Caco-2 (cell line): ENCODE measurements at regions of chr11 and their contacts with region 1.

Region 1: DNA sequence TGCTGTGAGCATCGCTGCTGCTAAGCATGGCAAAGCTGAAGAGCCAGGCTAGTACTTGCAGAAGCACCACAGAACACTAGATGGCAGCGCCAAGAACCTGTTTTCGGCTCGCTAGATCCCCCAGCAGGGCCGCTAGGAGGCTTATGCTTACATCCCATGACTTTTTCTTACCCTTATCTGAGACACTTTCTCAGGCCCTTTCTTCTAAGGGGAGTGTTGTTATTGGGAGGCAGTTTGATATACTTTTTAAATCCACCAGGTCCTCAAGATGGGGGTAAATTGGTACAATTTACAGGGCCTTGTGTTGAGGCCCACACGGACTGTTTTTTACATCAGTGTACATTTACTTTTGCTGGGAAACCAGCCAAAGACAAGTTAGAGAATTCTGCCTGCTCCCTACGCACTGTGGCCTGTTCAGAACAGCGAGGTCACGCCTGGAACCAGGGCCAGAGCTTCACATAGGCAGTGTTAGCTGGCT is 4.0 kb downstream of the TRIM6 start:
- DNase-seq: peak; percentile 74 to 77
- H3K4me3 ChIP-seq: no peak overlapping the region
- H3K4me3 Mint-ChIP-seq: no peak overlapping the region
- H3K27ac Mint-ChIP-seq: no peak overlapping the region
- H3K4me1 ChIP-seq: no peaks in the 10 kb centered on the region
- H3K4me1 Mint-ChIP-seq: no peaks in the 10 kb centered on the region
- H3K27me3 ChIP-seq: no peaks in the 10 kb centered on the region
- H3K27me3 Mint-ChIP-seq: no peaks in the 10 kb centered on the region
- CTCF ChIP-seq: peak; percentile 87 to 95

Region 2: GRCh38 chr11:5620646-5621521 is 20.5 kb after region 1 on chr11:
- CTCF ChIA-PET with region 1: interaction called, 5 read pairs
- POLR2A ChIA-PET with region 1: interaction called, 3 read pairs
- intact Hi-C with region 1: loop called (anchors 2 kb)
- DNase-seq: peak; percentile 72 to 78
- H3K4me3 ChIP-seq: no peak overlapping the region
- H3K4me3 Mint-ChIP-seq: peak overlapping the region; percentile 70
- H3K27ac Mint-ChIP-seq: peak overlapping the region; percentile 97
- H3K4me1 ChIP-seq: peaks cover 66% of the 10 kb centered on the region
- H3K4me1 Mint-ChIP-seq: peaks cover 41% of the 10 kb centered on the region
- H3K27me3 ChIP-seq: no peaks in the 10 kb centered on the region
- H3K27me3 Mint-ChIP-seq: no peaks in the 10 kb centered on the region
- CTCF ChIP-seq: no peak

Region 3: DNA sequence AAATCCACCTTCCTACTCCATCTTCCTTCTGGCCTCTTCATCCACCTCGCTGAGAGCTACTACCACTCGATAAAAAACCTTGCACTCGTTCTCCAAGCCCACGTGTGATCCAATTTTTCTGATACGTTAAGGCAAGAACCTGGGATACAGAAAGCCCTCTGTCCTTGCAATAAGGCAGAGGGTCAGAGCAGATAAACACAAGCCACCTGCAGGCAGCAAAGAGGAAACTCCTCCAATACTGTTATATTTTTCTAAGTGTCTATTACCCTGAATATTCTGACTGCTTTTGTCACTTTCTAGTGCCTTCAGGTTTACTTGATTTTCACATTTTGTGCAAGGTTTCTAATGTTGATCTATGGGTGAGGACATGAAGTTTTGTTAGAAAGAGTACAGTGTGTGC is 57.9 kb after region 1 on chr11:
- CTCF ChIA-PET with region 1: interaction called, 4 read pairs
- POLR2A ChIA-PET with region 1: no interaction called
- intact Hi-C with region 1: loop called (anchors 1 kb)
- DNase-seq: no peak
- H3K4me3 ChIP-seq: no peak overlapping the region
- H3K4me3 Mint-ChIP-seq: no peak overlapping the region
- H3K27ac Mint-ChIP-seq: no peak overlapping the region
- H3K4me1 ChIP-seq: no peaks in the 10 kb centered on the region
- H3K4me1 Mint-ChIP-seq: no peaks in the 10 kb centered on the region
- H3K27me3 ChIP-seq: no peaks in the 10 kb centered on the region
- H3K27me3 Mint-ChIP-seq: no peaks in the 10 kb centered on the region
- CTCF ChIP-seq: peak in 1 of 2 experiments; percentile 10

Region 4: GRCh38 chr11:5684646-5685362 is 84.4 kb after region 1 on chr11 and contains the start of gene TRIM5:
- CTCF ChIA-PET with region 1: interaction called, 7 read pairs
- POLR2A ChIA-PET with region 1: no interaction called
- intact Hi-C with region 1: loop called (anchors 2 kb)
- DNase-seq: peak; percentile 90 to 91
- H3K4me3 ChIP-seq: peak within 1 kb of the TSS; percentile 35
- H3K4me3 Mint-ChIP-seq: peak within 1 kb of the TSS; percentile 85
- H3K27ac Mint-ChIP-seq: peak within 1 kb of the TSS; percentile 95
- H3K4me1 ChIP-seq: peaks cover 11% of the 10 kb centered on the region; the same call in 1 of the 2 replicates
- H3K4me1 Mint-ChIP-seq: peaks cover 19% of the 10 kb centered on the region
- H3K27me3 ChIP-seq: no peaks in the 10 kb centered on the region
- H3K27me3 Mint-ChIP-seq: no peaks in the 10 kb centered on the region
- CTCF ChIP-seq: peak; percentile 56 to 83
- total RNA-seq, gene TRIM5: 21.9 and 25.2 TPM in 2 replicates

Region 5: GRCh38 chr11:5712507-5712906 is 112.1 kb after region 1 on chr11:
- CTCF ChIA-PET with region 1: no interaction called
- POLR2A ChIA-PET with region 1: no interaction called
- intact Hi-C with region 1: loop called (anchors 1 kb)
- DNase-seq: no peak
- H3K4me3 ChIP-seq: no peak overlapping the region
- H3K4me3 Mint-ChIP-seq: no peak overlapping the region
- H3K27ac Mint-ChIP-seq: no peak overlapping the region
- H3K4me1 ChIP-seq: no peaks in the 10 kb centered on the region
- H3K4me1 Mint-ChIP-seq: no peaks in the 10 kb centered on the region
- H3K27me3 ChIP-seq: no peaks in the 10 kb centered on the region
- H3K27me3 Mint-ChIP-seq: peaks cover 6% of the 10 kb centered on the region
- CTCF ChIP-seq: peak; percentile 38 to 57

Region 6: DNA sequence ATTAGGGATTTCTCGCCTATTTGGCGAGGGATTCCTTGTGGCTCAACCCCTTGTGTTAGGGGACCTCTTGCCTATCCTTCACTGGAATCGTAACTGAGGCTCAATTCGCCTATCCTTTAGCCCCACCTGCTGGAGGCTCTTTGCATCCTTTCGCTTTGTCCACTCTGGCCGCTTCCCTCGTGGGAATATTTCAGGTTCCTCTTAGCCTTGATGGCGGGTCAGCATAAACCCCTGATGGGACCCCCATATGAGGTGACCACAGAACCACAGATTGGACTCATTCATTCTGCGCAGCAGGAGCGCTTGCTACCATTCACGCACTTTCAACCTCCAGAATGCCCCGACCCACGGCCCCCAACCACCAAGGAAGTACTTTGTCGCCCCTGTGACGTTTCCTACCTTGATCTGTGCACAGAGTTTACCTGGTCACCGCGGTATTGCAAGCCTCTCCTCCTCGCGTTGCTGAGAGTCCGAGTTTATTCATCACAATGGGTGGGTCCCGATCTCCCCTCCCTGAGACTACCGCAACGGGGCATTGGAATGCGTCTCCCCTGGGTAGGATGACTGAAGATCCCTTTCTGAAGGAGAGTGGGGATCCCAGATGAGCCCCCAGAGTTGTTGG is 208.2 kb after region 1 on chr11 and contains the start of gene OR52N2:
- CTCF ChIA-PET with region 1: no interaction called
- POLR2A ChIA-PET with region 1: no interaction called
- intact Hi-C with region 1: loop called (anchors 1 kb)
- DNase-seq: peak; percentile 71 to 80
- H3K4me3 ChIP-seq: peak within 1 kb of the TSS; percentile 26
- H3K4me3 Mint-ChIP-seq: peak within 1 kb of the TSS; percentile 61
- H3K27ac Mint-ChIP-seq: no peak within 1 kb of the TSS
- H3K4me1 ChIP-seq: no peaks in the 10 kb centered on the region; the same call in 1 of the 2 replicates
- H3K4me1 Mint-ChIP-seq: peaks cover 6% of the 10 kb centered on the region
- H3K27me3 ChIP-seq: no peaks in the 10 kb centered on the region
- H3K27me3 Mint-ChIP-seq: peaks cover 16% of the 10 kb centered on the region
- CTCF ChIP-seq: peak; percentile 86 to 94
- total RNA-seq, gene OR52N2: not detected in 2 replicates

Region 7: GRCh38 chr11:5891216-5891800 is 290.9 kb after region 1 on chr11:
- CTCF ChIA-PET with region 1: interaction called, 3 read pairs
- POLR2A ChIA-PET with region 1: no interaction called
- intact Hi-C with region 1: loop called (anchors 1 kb)
- DNase-seq: no peak
- H3K4me3 ChIP-seq: no peak overlapping the region
- H3K4me3 Mint-ChIP-seq: no peak overlapping the region
- H3K27ac Mint-ChIP-seq: no peak overlapping the region
- H3K4me1 ChIP-seq: no peaks in the 10 kb centered on the region
- H3K4me1 Mint-ChIP-seq: no peaks in the 10 kb centered on the region
- H3K27me3 ChIP-seq: no peaks in the 10 kb centered on the region
- H3K27me3 Mint-ChIP-seq: peaks cover 10% of the 10 kb centered on the region
- CTCF ChIP-seq: peak; percentile 48 to 58

Region 8: DNA sequence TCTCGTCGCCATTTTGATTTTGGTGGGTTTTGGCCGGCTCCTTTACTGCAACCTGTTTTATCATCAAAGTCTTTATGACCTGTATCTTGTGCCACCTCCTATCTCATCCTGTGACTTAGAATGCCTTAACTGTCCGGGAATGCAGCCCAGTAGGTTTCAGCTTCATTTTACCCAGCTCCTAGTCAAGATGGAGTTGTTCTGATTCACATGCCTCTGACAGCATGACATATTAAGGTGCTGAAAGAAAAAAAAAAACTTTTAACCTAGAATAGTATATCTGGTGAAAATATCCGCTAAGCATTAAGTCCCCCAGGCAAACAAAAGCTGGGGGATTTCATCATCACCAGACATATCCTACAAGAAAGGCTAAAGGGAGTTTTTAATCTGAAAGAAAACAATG is 560.7 kb after region 1 on chr11:
- CTCF ChIA-PET with region 1: no interaction called
- POLR2A ChIA-PET with region 1: no interaction called
- intact Hi-C with region 1: no loop called
- DNase-seq: no peak
- H3K4me3 ChIP-seq: no peak overlapping the region
- H3K4me3 Mint-ChIP-seq: no peak overlapping the region
- H3K27ac Mint-ChIP-seq: no peak overlapping the region
- H3K4me1 ChIP-seq: no peaks in the 10 kb centered on the region
- H3K4me1 Mint-ChIP-seq: no peaks in the 10 kb centered on the region
- H3K27me3 ChIP-seq: no peaks in the 10 kb centered on the region
- H3K27me3 Mint-ChIP-seq: peaks cover 10% of the 10 kb centered on the region
- CTCF ChIP-seq: no peak